ENCODE measurements at regions of chr11 and their contacts with region 1.

Region 1: DNA sequence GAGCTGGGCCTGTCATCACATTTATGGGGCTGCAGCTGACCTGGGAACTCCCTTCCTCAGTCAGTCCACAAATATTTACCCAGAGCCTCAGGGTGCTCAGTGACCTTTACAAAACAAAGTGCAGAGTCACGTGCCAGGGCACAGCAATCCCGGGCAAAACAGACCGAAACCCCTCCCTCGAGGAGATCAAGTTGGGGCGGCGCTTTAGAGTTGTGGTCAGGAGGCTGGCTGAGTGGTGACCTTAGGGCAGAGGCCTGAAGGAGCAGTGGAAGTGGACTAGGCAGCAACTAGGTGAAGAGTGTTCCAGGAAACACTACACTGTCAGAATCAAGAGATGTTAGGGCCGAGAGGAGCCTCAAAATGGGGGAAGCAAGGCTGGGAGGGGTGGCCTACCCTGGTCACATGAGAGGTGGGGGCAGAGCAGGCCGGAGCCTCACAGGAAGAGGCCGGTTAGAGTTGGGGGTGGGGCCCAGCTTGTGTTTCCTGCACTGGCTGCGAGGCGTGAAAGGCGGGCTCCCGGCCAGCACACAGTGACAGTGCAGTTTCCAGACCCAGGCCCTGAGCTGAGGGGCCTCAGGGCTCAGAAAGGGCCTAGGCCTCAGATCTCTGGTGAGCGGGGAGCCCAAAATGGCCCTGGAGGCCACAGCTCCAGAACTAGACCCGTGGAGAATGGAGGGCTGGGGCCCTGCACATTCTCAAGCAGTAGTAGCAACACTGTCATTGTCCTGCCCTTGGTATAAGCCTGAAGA is 3.7 kb upstream of the NEAT1 start:
- DNase-seq: peak; percentile 58 to 90 (median 75)
- H3K4me3 ChIP-seq: peak overlapping the region; percentile 85
- H3K4me3 Mint-ChIP-seq: peak overlapping the region; percentile 93 to 97 (median 94)
- H3K27ac ChIP-seq: peak overlapping the region; percentile 98
- H3K27ac Mint-ChIP-seq: peak overlapping the region; percentile 93 to 99 (median 97)
- H3K4me1 ChIP-seq: peaks cover 59% of the 10 kb centered on the region
- H3K4me1 Mint-ChIP-seq: peaks cover 58 to 66% (median 62%) of the 10 kb centered on the region in 3 donors
- H3K27me3 ChIP-seq: no peaks in the 10 kb centered on the region
- H3K27me3 Mint-ChIP-seq: peaks cover 0 to 21% of the 10 kb centered on the region in 2 donors

Region 2: GRCh38 chr11:65194564-65194963 is 224.3 kb before region 1 on chr11:
- CTCF ChIA-PET with region 1: no interaction called
- POLR2A ChIA-PET with region 1: no interaction called
- DNase-seq: no peak
- H3K4me3 ChIP-seq: no peak overlapping the region
- H3K4me3 Mint-ChIP-seq: no peak overlapping the region
- H3K27ac ChIP-seq: no peak overlapping the region
- H3K27ac Mint-ChIP-seq: peak overlapping the region in 1 of 8 donors; percentile 21
- H3K4me1 ChIP-seq: no peaks in the 10 kb centered on the region
- H3K4me1 Mint-ChIP-seq: peaks cover 15 to 24% (median 22%) of the 10 kb centered on the region in 3 donors
- H3K27me3 ChIP-seq: no peaks in the 10 kb centered on the region
- H3K27me3 Mint-ChIP-seq: peaks cover 0 to 2% of the 10 kb centered on the region in 2 donors

Region 3: DNA sequence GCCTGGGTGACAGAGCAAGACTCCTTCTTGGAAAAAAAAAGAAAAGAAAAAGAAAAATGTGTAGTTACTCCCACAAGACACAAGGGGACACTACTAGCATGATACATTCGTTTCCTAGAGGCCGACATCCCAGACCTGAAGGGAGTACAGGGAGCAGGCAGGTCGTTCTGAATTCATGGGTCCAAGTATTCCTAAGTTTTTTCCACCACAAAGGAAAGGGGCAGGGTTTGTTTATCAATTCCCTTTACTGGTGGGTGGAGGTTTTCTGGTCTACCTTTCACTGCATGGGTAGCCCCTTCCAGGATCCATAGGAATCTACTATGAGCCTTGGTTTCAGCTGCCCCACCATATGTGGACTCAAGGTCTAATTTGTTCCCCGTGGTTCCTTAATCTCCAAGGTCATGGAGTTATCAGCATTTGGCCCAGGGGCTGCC is 52.5 kb before region 1 on chr11:
- CTCF ChIA-PET with region 1: interaction called, 13 read pairs
- POLR2A ChIA-PET with region 1: no interaction called
- DNase-seq: peak in 4 of 5 donors; percentile 22 to 61 (median 60)
- H3K4me3 ChIP-seq: no peak overlapping the region
- H3K4me3 Mint-ChIP-seq: no peak overlapping the region
- H3K27ac ChIP-seq: no peak overlapping the region
- H3K27ac Mint-ChIP-seq: no peak overlapping the region
- H3K4me1 ChIP-seq: no peaks in the 10 kb centered on the region
- H3K4me1 Mint-ChIP-seq: peaks cover 0 to 7% (median 0%) of the 10 kb centered on the region in 3 donors
- H3K27me3 ChIP-seq: no peaks in the 10 kb centered on the region
- H3K27me3 Mint-ChIP-seq: no peaks in the 10 kb centered on the region

Region 4: GRCh38 chr11:65403607-65404121 is 15.2 kb before region 1 on chr11:
- CTCF ChIA-PET with region 1: interaction called, 15 read pairs
- POLR2A ChIA-PET with region 1: interaction called, 3 read pairs
- DNase-seq: no peak
- H3K4me3 ChIP-seq: no peak overlapping the region
- H3K4me3 Mint-ChIP-seq: no peak overlapping the region
- H3K27ac ChIP-seq: peak overlapping the region; percentile 38
- H3K27ac Mint-ChIP-seq: no peak overlapping the region
- H3K4me1 ChIP-seq: no peaks in the 10 kb centered on the region
- H3K4me1 Mint-ChIP-seq: peaks cover 0 to 3% (median 0%) of the 10 kb centered on the region in 3 donors
- H3K27me3 ChIP-seq: no peaks in the 10 kb centered on the region
- H3K27me3 Mint-ChIP-seq: no peaks in the 10 kb centered on the region

Region 5: DNA sequence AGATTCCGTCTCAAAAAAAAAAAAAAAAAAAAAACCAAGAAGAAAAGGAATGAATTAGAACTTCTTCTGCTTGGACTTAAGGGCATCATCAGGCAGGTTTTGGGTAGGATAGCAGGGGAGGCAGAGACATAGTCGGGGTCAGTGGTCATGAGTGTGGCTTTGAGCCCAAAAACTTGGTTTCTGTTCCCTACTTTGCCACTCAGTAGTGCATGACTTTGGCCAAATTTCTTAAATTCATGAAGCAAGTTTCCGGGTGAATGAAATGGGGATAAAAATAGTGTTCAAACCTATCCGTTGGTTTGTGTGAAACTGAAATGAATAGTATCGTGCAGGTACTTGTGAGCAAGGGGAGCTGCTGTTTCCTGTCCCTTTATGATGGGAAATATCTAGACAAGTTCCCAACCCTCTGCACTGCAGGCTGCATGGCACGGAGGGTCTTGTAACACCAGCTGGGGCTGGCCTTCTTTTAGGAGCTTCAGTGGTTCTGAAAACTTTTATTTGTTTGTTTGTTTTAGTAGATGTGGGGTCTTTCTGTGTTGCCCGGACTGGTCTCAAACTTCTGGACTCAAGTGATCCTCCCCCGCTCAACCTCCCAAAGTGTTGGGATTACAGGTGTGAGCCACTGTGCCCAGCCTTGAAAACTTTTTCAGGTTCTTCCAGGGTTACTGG is 22.1 kb after region 1 on chr11:
- CTCF ChIA-PET with region 1: interaction called, 7 read pairs
- POLR2A ChIA-PET with region 1: interaction called, 12 read pairs
- DNase-seq: peak in 1 of 5 donors; percentile 18
- H3K4me3 ChIP-seq: no peak overlapping the region
- H3K4me3 Mint-ChIP-seq: peak overlapping the region in 6 of 7 donors; percentile 45 to 75 (median 62)
- H3K27ac ChIP-seq: no peak overlapping the region
- H3K27ac Mint-ChIP-seq: peak overlapping the region; percentile 57 to 91 (median 86)
- H3K4me1 ChIP-seq: peaks cover 16% of the 10 kb centered on the region
- H3K4me1 Mint-ChIP-seq: peaks cover 61 to 80% (median 80%) of the 10 kb centered on the region in 3 donors
- H3K27me3 ChIP-seq: no peaks in the 10 kb centered on the region
- H3K27me3 Mint-ChIP-seq: no peaks in the 10 kb centered on the region

Region 6: DNA sequence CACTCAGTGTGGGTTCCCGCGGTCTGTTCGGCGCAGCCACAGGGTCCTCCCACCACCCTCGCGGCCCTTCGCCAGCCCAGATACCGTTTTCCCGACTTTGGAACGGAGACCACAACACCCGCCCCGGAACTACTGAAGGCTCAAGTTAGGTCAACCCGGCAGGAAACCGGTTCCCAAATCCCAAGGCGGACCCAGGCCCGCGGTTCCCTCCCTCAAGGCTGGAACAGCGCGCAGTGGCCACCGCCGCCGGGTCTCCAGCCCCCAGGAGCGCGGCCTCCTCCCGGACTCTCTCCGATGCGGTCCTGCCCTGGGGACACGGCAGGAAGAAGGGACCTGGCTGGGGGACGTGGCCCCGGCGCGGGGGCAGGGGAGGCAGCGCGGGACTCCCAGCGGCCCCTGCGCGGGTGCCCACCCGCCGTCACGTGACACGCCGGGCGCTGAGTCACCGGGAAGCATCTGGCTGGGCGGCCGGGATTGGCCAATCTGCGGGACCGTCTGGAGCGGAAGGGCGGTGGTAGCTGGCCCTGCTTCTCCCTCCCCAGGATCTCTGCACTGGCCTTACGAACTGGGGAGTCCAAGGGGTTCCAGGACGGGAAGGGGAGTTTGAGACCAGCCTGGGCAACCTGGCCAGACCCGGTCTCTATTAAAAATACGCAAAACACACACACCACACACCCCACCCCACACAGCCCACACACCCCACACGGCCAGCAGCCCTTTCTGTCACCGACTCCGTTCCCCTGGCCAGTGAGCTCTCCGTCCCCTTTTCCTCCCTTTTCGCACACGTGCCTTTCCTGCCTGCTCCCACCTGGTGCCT is 58.5 kb after region 1 on chr11:
- CTCF ChIA-PET with region 1: interaction called, 16 read pairs
- POLR2A ChIA-PET with region 1: interaction called, 33 read pairs
- DNase-seq: peak; percentile 82 to 94 (median 86)
- H3K4me3 ChIP-seq: peak overlapping the region; percentile 86
- H3K4me3 Mint-ChIP-seq: peak overlapping the region; percentile 90 to 100 (median 97)
- H3K27ac ChIP-seq: peak overlapping the region; percentile 98
- H3K27ac Mint-ChIP-seq: peak overlapping the region; percentile 96 to 100 (median 100)
- H3K4me1 ChIP-seq: peaks cover 12% of the 10 kb centered on the region
- H3K4me1 Mint-ChIP-seq: peaks cover 12 to 27% (median 14%) of the 10 kb centered on the region in 3 donors
- H3K27me3 ChIP-seq: no peaks in the 10 kb centered on the region
- H3K27me3 Mint-ChIP-seq: no peaks in the 10 kb centered on the region